ENCODE measurements at regions of chr4 and their contacts with region 1.

Region 1: GRCh38 chr4:68904786-68905185 is 46.8 kb downstream of the UGT2A3 start:
- DNase-seq: peak; percentile 62 to 63
- H3K4me3 ChIP-seq: no peak overlapping the region
- H3K4me3 Mint-ChIP-seq: peak overlapping the region; percentile 83
- H3K27ac Mint-ChIP-seq: peak overlapping the region; percentile 94
- H3K4me1 ChIP-seq: peaks cover 47% of the 10 kb centered on the region
- H3K4me1 Mint-ChIP-seq: peaks cover 17% of the 10 kb centered on the region
- H3K27me3 ChIP-seq: no peaks in the 10 kb centered on the region
- H3K27me3 Mint-ChIP-seq: no peaks in the 10 kb centered on the region
- CTCF ChIP-seq: peak; percentile 44 to 54

Region 2: DNA sequence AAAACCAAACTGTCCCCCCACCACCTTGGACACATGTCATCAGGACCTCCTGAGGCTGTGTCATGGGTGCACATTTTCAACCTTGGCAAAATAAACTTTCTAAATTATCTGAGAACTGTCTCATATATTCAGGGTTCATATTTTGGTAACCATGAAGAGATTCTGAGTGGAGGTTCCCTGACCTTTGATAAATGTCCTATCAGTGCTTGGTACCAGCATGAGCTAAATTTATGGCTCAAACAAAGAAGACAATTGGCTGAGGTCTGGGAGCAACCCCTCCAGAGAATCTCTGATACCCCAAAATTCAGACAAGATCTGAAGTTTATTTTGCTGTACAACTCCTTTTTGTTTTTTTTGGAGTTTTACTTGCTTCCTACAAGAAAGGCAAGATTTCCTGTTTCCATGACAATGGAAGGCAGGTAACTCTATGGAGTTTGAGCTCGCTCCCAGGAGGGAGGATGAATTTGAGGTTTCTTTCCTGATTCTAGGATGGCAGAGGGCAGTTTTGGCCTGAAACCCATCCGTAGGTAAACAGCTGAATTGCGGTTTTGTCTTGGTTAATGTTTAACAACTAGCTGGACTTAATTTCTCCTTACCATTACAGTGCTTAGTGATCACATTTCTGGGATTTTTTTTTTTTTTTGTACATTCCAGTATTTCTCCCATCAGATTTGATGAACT is 248.9 kb before region 1 on chr4:
- CTCF ChIA-PET with region 1: no interaction called
- POLR2A ChIA-PET with region 1: no interaction called
- intact Hi-C with region 1: loop called (anchors 5 kb)
- DNase-seq: peak; percentile 45 to 48
- H3K4me3 ChIP-seq: no peak overlapping the region
- H3K4me3 Mint-ChIP-seq: peak overlapping the region; percentile 54
- H3K27ac Mint-ChIP-seq: peak overlapping the region; percentile 39
- H3K4me1 ChIP-seq: peaks cover 28% of the 10 kb centered on the region
- H3K4me1 Mint-ChIP-seq: peaks cover 17% of the 10 kb centered on the region
- H3K27me3 ChIP-seq: no peaks in the 10 kb centered on the region
- H3K27me3 Mint-ChIP-seq: no peaks in the 10 kb centered on the region
- CTCF ChIP-seq: no peak

Region 3: DNA sequence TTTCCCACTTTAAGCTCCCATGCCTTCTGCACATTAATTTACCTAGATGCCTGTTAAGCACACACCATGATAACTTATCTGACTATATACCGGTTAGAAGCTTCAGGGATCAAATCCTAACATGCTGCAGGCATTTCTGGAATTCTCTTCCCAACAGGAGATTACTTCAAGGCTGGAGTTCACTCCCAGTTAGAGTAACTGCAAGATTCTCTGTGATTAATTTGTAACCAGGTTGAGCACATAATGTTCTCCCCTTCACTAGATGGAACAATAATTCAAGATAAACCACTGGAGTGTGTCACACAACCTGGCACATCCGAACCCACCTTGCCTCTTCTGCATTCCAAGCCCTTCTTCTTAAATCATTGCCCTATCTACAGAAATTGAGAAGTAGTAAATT is 58.6 kb after region 1 on chr4:
- CTCF ChIA-PET with region 1: interaction called, 4 read pairs
- POLR2A ChIA-PET with region 1: interaction called, 3 read pairs
- intact Hi-C with region 1: loop called (anchors 1 kb)
- DNase-seq: peak; percentile 29 to 42
- H3K4me3 ChIP-seq: no peak overlapping the region
- H3K4me3 Mint-ChIP-seq: peak overlapping the region; percentile 38
- H3K27ac Mint-ChIP-seq: peak overlapping the region; percentile 34
- H3K4me1 ChIP-seq: peaks cover 49% of the 10 kb centered on the region
- H3K4me1 Mint-ChIP-seq: peaks cover 34% of the 10 kb centered on the region
- H3K27me3 ChIP-seq: no peaks in the 10 kb centered on the region
- H3K27me3 Mint-ChIP-seq: no peaks in the 10 kb centered on the region
- CTCF ChIP-seq: no peak

Region 4: DNA sequence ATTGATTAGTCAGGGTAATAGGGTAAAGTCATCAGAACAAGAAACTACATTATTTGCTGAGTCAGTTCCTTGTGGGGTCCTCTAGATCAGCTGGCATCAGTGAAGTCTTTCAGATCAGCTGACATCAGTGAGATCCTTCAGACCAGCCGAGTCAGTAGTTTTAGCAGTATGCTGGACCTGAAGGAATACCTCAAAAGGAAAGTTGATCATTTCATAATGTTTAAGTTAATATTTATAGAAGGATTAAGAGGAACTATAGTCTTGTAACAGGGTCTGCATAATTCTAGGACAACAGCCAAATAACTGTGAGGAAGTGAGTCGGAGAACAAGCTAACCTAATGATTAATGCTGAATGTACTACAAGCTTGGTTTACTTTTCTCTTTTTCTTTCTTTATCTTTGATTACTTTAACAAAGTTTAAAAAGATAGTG is 190.5 kb after region 1 on chr4:
- CTCF ChIA-PET with region 1: no interaction called
- POLR2A ChIA-PET with region 1: no interaction called
- intact Hi-C with region 1: loop called (anchors 2 kb)
- DNase-seq: no peak
- H3K4me3 ChIP-seq: no peak overlapping the region
- H3K4me3 Mint-ChIP-seq: no peak overlapping the region
- H3K27ac Mint-ChIP-seq: peak overlapping the region; percentile 81
- H3K4me1 ChIP-seq: peaks cover 31% of the 10 kb centered on the region
- H3K4me1 Mint-ChIP-seq: peaks cover 28% of the 10 kb centered on the region
- H3K27me3 ChIP-seq: no peaks in the 10 kb centered on the region
- H3K27me3 Mint-ChIP-seq: no peaks in the 10 kb centered on the region
- CTCF ChIP-seq: no peak

Measured in Caco-2 (cell line).